Activated B cell treated with CpG ODN at 0.5 μM for 24 hours (primary cell): ENCODE measurements at regions of chr19 and their contacts with region 1.

Region 1: GRCh38 chr19:7340959-7341837 is 7.5 kb upstream of the ARHGEF18 start:
- DNase-seq: peak; percentile 83
- ATAC-seq: no peak
- H3K4me3 Mint-ChIP-seq: peak overlapping the region; percentile 52
- H3K27ac Mint-ChIP-seq: peak overlapping the region; percentile 82
- H3K4me1 Mint-ChIP-seq: peaks cover 91% of the 10 kb centered on the region
- H3K27me3 Mint-ChIP-seq: no peaks in the 10 kb centered on the region
- CTCF ChIP-seq: peak; percentile 64

Region 2: GRCh38 chr19:7152568-7152967 is 188.6 kb before region 1 on chr19:
- CTCF ChIA-PET with region 1: interaction called, 54 read pairs
- POLR2A ChIA-PET with region 1: interaction called, 12 read pairs
- intact Hi-C with region 1: loop called (anchors 1 kb)
- DNase-seq: no peak
- ATAC-seq: no peak
- H3K4me3 Mint-ChIP-seq: no peak overlapping the region
- H3K27ac Mint-ChIP-seq: no peak overlapping the region
- H3K4me1 Mint-ChIP-seq: peaks cover 5% of the 10 kb centered on the region
- H3K27me3 Mint-ChIP-seq: no peaks in the 10 kb centered on the region
- CTCF ChIP-seq: no peak

Region 3: GRCh38 chr19:7293795-7294570 is 47.2 kb before region 1 on chr19 and contains the start of gene INSR:
- CTCF ChIA-PET with region 1: no interaction called
- POLR2A ChIA-PET with region 1: interaction called, 5 read pairs
- intact Hi-C with region 1: loop called (anchors 5 kb)
- DNase-seq: peak; percentile 48
- ATAC-seq: peak; percentile 79
- H3K4me3 Mint-ChIP-seq: peak within 1 kb of the TSS; percentile 77
- H3K27ac Mint-ChIP-seq: no peak within 1 kb of the TSS
- H3K4me1 Mint-ChIP-seq: peaks cover 24% of the 10 kb centered on the region
- H3K27me3 Mint-ChIP-seq: peaks cover 27% of the 10 kb centered on the region
- CTCF ChIP-seq: no peak
- total RNA-seq, gene INSR: 3.2 and 3.3 TPM in 2 replicates

Region 4: GRCh38 chr19:7355151-7355820 is 14.1 kb after region 1 on chr19:
- CTCF ChIA-PET with region 1: interaction called, 16 read pairs
- POLR2A ChIA-PET with region 1: interaction called, 36 read pairs
- intact Hi-C with region 1: loop called (anchors 2 kb)
- DNase-seq: no peak
- ATAC-seq: no peak
- H3K4me3 Mint-ChIP-seq: peak overlapping the region; percentile 41
- H3K27ac Mint-ChIP-seq: peak overlapping the region; percentile 86
- H3K4me1 Mint-ChIP-seq: peaks cover 82% of the 10 kb centered on the region
- H3K27me3 Mint-ChIP-seq: no peaks in the 10 kb centered on the region
- CTCF ChIP-seq: no peak

Region 5: DNA sequence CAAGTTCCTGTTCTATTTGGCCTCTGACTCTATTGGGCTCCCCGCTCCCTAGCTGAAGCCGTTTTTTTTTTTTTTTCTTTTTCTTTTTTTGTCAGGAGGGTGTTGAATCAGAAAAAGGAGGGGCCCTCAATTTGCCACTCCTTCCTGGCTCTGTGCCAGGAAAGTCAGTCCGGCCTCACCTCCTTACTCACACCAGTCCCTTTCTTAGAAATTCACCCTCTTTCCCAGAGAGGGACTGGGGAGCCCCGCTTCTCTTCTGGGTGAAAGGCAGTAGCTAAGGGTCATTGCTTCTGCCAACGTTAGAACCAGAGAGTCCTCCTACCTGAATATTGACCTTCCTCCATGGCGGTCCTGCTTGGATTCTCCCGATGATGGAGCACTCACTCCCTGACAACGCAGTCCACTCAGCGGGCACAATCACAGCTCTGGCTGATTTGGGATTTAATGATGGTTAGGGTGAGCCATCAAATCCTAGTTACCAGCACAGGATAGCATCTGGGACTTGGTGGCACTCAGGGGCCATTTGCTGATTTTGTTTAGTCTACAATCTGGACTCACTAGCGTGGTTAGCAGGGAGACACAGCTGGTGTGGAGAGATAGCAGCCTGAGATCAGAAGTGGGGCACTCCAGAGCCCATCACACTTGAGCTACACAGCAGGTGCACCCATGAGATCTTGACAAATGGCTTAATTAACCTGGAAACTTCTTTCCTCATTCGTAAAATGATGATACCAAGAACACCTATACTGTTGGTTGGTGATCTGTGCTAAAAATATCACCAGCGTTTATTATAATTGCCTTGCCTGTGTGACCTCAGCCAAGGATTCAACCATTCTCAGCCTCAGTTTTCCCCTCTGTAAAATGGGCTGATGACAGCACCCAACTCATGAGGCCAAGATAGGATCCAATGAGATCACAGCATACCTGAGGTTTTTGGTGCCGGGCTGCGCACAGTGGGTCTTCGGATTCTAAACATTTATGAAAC is 358.5 kb after region 1 on chr19:
- CTCF ChIA-PET with region 1: no interaction called
- POLR2A ChIA-PET with region 1: interaction called, 12 read pairs
- intact Hi-C with region 1: no loop called
- DNase-seq: no peak
- ATAC-seq: no peak
- H3K4me3 Mint-ChIP-seq: peak overlapping the region; percentile 84
- H3K27ac Mint-ChIP-seq: peak overlapping the region; percentile 97
- H3K4me1 Mint-ChIP-seq: peaks cover 99% of the 10 kb centered on the region
- H3K27me3 Mint-ChIP-seq: no peaks in the 10 kb centered on the region
- CTCF ChIP-seq: no peak